ENCODE measurements at regions of chr1 and their contacts with region 1.

Region 1: GRCh38 chr1:45339789-45340570 is at the starts of genes MUTYH and TOE1:
- DNase-seq: peak; percentile 98
- ATAC-seq: peak; percentile 93
- H3K4me3 Mint-ChIP-seq: peak within 1 kb of the TSS; percentile 100
- H3K27ac Mint-ChIP-seq: peak within 1 kb of the TSS; percentile 99
- H3K4me1 Mint-ChIP-seq: peaks cover 32% of the 10 kb centered on the region
- H3K27me3 Mint-ChIP-seq: no peaks in the 10 kb centered on the region
- CTCF ChIP-seq: no peak
- total RNA-seq, gene MUTYH: 58.3 to 67.2 TPM (median 65.7 TPM) in 3 replicates
- total RNA-seq, gene TOE1: 7.4 to 10.9 TPM (median 10.0 TPM) in 3 replicates

Region 2: GRCh38 chr1:45326627-45327623 is 13.1 kb before region 1 on chr1 and contains the start of gene HPDL:
- CTCF ChIA-PET with region 1: interaction called, 32 read pairs
- POLR2A ChIA-PET with region 1: interaction called, 54 read pairs
- DNase-seq: peak; percentile 86
- ATAC-seq: peak; percentile 83
- H3K4me3 Mint-ChIP-seq: peak within 1 kb of the TSS; percentile 70
- H3K27ac Mint-ChIP-seq: peak within 1 kb of the TSS; percentile 79
- H3K4me1 Mint-ChIP-seq: peaks cover 46% of the 10 kb centered on the region
- H3K27me3 Mint-ChIP-seq: no peaks in the 10 kb centered on the region; the same call in 1 of the 2 replicates
- CTCF ChIP-seq: no peak
- total RNA-seq, gene HPDL: 24.9 to 44.0 TPM (median 27.8 TPM) in 3 replicates

Region 3: DNA sequence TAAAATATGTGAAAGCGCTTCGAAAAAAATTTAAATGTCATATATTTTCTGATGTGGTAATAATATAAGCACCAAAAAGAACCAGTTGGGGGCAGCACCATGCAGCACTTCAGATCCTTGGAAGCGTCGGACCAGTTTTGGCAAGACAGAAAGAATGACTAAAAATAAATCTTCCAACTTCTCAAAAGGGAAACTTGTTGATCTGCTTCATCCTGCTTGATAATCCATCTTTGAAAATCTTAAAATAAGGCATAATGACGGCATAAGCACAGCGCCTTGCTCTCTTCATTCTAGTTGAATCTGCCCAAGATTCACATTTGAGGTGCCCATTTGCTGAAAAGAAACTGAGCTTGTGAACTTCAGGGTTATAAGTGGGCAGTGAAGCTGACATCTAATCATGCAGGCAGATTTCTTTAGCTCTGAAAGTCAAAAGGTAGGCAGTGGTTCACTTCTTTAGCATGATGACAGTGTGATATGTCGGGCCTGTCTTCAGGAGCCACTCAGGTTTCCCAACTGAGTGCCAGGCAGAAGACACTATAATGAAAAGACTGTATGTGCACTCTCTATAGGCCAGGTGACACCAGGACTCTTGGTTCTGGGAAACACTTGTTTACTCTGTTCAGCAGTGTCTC is 20.0 kb after region 1 on chr1:
- CTCF ChIA-PET with region 1: interaction called, 16 read pairs
- POLR2A ChIA-PET with region 1: interaction called, 9 read pairs
- DNase-seq: peak; percentile 32
- ATAC-seq: peak; percentile 50
- H3K4me3 Mint-ChIP-seq: peak overlapping the region; percentile 55
- H3K27ac Mint-ChIP-seq: peak overlapping the region; percentile 95
- H3K4me1 Mint-ChIP-seq: peaks cover 30% of the 10 kb centered on the region
- H3K27me3 Mint-ChIP-seq: no peaks in the 10 kb centered on the region
- CTCF ChIP-seq: peak; percentile 20; the same call in 1 of the 2 replicates

Region 4: DNA sequence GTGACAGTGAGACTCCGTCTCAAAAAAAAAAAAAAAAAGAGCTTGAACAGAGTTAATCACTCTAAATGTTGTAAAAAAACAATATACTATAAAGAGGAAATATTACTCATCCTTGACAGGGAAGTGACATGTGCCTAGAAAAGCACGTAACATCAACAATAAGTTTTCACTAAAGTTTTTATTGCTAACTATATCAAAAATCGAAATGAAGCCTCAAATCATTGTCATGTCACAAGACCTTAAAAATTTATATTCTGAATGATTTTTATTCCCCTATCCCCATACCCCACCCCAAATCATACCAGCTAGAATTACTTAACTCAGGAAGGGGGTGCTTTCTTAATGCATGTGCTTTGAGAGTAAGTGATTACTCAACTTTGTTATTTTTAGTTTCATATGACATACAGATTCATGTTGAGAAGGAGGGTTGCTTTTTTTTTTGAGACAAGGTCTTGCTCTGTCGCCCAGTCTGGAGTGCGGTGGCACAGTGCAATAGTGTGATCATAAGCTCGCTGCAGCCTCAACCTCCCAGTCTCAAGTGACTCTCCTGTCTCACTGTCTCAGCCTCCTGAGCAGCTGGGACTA is 53.8 kb after region 1 on chr1:
- CTCF ChIA-PET with region 1: no interaction called
- POLR2A ChIA-PET with region 1: no interaction called
- DNase-seq: no peak
- ATAC-seq: no peak
- H3K4me3 Mint-ChIP-seq: no peak overlapping the region
- H3K27ac Mint-ChIP-seq: no peak overlapping the region
- H3K4me1 Mint-ChIP-seq: no peaks in the 10 kb centered on the region
- H3K27me3 Mint-ChIP-seq: no peaks in the 10 kb centered on the region
- CTCF ChIP-seq: no peak

Region 5: DNA sequence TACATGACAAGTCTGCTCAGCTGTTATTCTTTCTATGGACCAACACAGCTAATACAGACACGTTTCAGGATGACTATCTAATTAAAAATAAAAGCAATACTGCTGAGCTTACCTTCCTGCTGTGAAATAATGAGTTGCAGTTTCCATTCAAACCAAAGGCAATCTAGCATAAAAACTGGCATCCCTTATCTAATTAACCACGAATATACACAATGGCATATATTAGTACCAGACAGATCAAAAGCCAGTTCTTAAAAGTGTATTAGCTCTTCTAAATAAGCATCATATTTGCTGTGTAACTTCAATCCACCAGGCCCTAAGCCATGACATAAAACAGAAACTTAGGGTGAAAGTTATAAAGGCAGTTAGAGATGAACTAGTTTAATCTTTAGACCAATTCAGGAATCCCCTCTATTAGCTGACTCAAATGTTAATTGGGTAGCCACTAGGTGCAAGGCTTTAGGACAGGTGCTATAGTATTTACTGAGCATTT is 130.4 kb after region 1 on chr1:
- CTCF ChIA-PET with region 1: no interaction called
- POLR2A ChIA-PET with region 1: no interaction called
- DNase-seq: no peak
- ATAC-seq: no peak
- H3K4me3 Mint-ChIP-seq: no peak overlapping the region
- H3K27ac Mint-ChIP-seq: no peak overlapping the region
- H3K4me1 Mint-ChIP-seq: no peaks in the 10 kb centered on the region
- H3K27me3 Mint-ChIP-seq: no peaks in the 10 kb centered on the region
- CTCF ChIP-seq: no peak

Measured in WTC11 (cell line).